ENCODE measurements at regions of chr11 and their contacts with region 1.

Region 1: DNA sequence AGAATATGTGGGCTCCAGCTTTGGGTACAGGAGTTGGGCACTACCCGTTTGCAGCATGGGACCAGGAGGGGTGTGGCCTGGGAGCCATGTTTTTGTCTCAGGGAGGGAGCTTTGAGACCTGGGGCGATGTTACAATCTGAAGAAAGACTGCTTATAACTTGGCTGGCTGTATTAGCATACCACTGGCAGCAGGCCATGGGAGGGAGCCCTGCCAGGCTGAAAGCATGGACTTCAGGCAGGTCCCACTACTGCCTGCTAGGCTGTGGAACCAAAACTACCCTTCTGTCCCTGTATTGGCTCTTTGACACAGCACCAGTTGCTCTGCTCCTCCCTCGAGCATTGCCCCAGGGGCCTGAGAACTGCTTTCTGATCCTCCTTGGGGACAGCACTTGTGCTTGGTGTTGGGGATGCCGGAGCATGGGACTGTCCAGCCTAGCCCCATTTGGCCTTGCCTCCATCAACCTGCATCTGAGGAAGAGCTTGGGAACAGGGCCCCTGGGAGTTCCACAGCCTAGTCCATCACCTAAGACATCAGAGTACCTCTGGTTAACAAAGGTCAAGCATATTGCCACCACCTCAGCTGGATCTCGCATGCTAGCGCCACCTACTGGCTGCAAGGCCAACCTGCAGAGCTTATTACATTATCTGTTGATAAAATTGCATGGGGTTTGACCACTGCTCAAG is 217.4 kb downstream of the SBF2 start:
- DNase-seq: peak; percentile 65
- H3K4me3 ChIP-seq: no peak overlapping the region
- H3K27ac ChIP-seq: no peak overlapping the region
- H3K4me1 ChIP-seq: no peaks in the 10 kb centered on the region
- CTCF ChIP-seq: peak; percentile 87

Region 2: DNA sequence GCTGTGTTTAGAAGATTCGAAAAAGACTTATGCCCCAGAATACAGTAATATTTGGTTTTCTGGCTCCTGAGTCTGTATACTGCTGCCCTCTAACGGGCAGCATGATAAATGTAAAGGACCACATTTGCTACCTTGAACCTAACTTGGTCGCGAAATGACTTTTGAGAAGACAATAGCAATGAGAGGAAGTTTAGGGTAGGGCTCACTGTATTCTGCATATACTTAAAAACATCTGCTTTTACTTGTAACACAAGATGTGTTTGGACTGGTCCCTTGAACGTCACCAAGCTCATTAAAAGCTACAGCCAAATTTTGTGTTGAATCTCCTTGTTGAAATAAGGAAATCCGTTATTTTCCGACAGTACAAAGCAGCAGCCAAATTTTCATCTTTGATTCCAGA is 103.6 kb before region 1 on chr11:
- CTCF ChIA-PET with region 1: no interaction called
- POLR2A ChIA-PET with region 1: no interaction called
- intact Hi-C with region 1: no loop called
- DNase-seq: peak; percentile 73
- H3K4me3 ChIP-seq: no peak overlapping the region
- H3K27ac ChIP-seq: no peak overlapping the region
- H3K4me1 ChIP-seq: no peaks in the 10 kb centered on the region
- CTCF ChIP-seq: peak; percentile 92

Region 3: DNA sequence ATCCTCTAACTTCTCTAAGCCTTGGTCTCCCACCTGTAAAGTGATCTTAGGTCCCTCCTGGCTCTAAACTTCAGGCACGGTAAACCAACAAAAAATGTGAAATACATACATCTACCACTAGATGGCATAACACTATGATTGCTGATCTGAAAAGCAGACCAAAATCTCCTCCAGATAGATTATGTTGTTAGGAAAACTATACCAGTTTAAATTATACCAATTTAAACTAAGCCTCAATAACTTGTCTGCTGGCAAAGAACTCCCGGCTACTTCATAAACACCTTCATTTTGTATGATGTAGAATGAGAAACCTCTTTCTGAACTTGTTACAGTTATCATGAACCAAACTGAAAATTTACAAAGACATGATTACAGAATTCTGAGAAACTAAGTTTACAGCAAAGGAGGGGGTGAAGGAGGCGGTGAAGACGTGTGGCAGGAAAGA is 131.6 kb after region 1 on chr11:
- CTCF ChIA-PET with region 1: no interaction called
- POLR2A ChIA-PET with region 1: no interaction called
- intact Hi-C with region 1: no loop called
- DNase-seq: peak; percentile 72
- H3K4me3 ChIP-seq: no peak overlapping the region
- H3K27ac ChIP-seq: no peak overlapping the region
- H3K4me1 ChIP-seq: no peaks in the 10 kb centered on the region
- CTCF ChIP-seq: peak; percentile 95

Region 4: DNA sequence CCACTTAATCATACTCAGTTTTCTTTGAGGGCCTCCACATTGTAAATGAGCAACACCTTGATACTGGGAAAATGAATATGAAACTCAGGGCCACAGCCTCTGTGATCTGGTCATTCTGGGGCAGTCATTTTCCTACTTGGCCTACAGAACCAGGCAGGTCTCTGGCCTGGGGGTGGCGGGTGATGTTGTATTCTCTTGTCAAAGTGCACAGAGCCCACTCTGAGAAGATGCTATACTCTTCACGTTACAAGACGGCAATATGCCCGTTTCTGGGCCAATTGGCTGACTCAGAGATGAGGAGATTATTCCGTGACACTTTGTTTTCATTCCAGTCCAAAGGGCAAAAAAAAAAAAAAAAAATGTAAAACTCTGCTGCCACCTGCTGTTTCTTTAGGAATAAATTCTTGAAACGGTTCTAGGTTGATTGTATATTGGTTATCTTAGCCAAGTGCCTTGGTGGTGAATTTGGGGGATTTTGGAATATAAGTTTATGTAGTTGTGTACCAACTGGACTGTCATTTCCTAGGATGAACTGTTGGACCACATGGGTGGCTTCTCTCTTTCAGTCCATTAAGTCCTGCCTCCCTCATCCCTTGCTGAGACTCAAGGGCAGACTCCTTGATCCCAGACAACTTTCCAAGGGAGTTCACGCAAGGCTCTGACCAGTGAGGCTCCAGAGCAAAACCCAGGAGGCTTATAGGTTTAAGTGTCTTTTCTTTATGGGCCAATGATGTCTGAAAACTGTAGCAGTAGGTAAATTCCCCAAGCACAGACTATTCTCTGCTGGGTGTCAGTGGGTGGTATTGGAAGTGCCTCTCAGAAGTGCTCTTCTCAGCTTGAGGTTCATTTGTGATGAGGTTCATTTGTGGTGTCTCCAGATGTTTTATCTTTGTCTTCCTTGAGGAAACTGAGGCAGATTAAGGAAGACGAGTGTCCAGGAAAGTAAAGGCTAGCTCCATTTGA is 246.5 kb after region 1 on chr11:
- CTCF ChIA-PET with region 1: no interaction called
- POLR2A ChIA-PET with region 1: no interaction called
- intact Hi-C with region 1: loop called (anchors 5 kb)
- DNase-seq: peak; percentile 76
- H3K4me3 ChIP-seq: peak overlapping the region; percentile 8
- H3K27ac ChIP-seq: peak overlapping the region; percentile 5
- H3K4me1 ChIP-seq: peaks cover 40% of the 10 kb centered on the region
- CTCF ChIP-seq: peak; percentile 87

Measured in OCI-LY7 (cell line).